Activated CD8-positive, alpha-beta T cell treated with anti-CD3 and anti-CD28 coated beads for 36 hours (primary cell): ENCODE measurements at regions of chr10 and their contacts with region 1.

Region 1: GRCh38 chr10:109914966-109915365 is 8.3 kb downstream of the XPNPEP1 start:
- DNase-seq: peak; percentile 66
- ATAC-seq: peak; percentile 87
- H3K4me3 Mint-ChIP-seq: peak overlapping the region; percentile 30
- H3K27ac Mint-ChIP-seq: peak overlapping the region; percentile 88
- H3K4me1 Mint-ChIP-seq: peaks cover 79% of the 10 kb centered on the region
- H3K27me3 Mint-ChIP-seq: no peaks in the 10 kb centered on the region
- CTCF ChIP-seq: no peak

Region 2: GRCh38 chr10:109740436-109740835 is 174.5 kb before region 1 on chr10:
- CTCF ChIA-PET with region 1: no interaction called
- POLR2A ChIA-PET with region 1: no interaction called
- intact Hi-C with region 1: no loop called
- DNase-seq: no peak
- ATAC-seq: no peak
- H3K4me3 Mint-ChIP-seq: no peak overlapping the region
- H3K27ac Mint-ChIP-seq: no peak overlapping the region
- H3K4me1 Mint-ChIP-seq: no peaks in the 10 kb centered on the region
- H3K27me3 Mint-ChIP-seq: peaks cover 5% of the 10 kb centered on the region
- CTCF ChIP-seq: no peak

Region 3: DNA sequence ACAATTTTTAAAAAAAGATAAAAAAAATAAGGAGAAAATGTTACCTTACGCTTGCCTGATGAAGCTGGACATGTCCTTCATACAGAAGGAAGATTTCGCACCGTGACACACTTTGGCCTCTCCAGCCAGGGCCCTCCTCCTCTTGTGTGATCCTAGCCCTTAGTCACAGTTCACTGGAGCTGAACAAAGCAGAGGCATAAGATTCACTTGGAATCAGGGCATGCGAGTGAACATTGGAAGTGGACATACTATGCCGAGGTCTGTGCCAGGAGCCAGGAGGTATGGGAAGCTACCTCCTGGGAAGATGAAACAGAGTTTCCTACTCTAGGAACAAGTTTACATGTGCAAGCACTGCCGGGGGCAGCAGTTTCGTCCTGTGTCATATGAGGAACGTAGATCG is 83.1 kb before region 1 on chr10:
- CTCF ChIA-PET with region 1: no interaction called
- POLR2A ChIA-PET with region 1: no interaction called
- intact Hi-C with region 1: no loop called
- DNase-seq: no peak
- ATAC-seq: no peak
- H3K4me3 Mint-ChIP-seq: no peak overlapping the region
- H3K27ac Mint-ChIP-seq: no peak overlapping the region
- H3K4me1 Mint-ChIP-seq: no peaks in the 10 kb centered on the region
- H3K27me3 Mint-ChIP-seq: peaks cover 9% of the 10 kb centered on the region
- CTCF ChIP-seq: no peak

Region 4: DNA sequence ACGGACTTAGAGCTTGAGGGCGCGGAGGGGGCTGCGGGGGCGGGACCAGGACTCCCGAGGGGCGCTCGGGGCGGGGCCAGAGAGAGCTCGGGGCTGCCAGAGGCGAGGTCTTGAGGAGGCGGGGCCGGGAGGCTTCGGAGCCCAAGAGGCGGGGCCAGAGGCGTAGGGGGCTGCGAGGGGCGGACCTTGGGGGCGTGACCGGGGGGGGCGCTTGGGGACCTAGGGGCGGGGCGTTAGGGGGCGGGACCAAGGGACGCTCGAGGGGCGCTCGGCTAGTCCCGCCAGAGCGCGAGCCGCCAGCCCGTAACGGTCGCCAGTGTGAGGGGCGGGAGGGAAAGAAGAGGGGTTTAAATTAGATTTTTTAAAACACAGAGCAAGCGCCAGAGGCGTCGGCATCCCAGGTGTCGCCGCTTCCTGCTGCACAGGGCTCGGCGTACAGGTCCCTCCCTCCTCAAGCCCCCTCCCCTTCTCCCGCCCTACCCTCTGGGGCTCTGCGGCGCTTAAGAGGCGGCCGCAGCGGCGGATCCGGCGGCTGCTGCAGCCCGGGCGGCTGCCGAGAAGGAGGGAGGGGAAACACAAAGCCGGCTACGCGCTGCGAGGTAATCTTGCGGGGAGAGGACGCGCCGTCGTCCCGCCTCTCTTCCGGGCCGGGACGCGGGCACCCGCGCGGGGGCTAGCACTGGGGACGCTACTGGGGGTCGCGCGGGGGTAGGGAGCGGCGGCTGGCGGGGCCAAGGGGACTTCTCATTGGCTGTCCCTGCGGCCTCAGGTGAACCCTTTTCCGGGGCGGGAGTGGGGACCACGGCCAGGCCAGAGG is 92.9 kb after region 1 on chr10 and contains the start of gene ADD3:
- CTCF ChIA-PET with region 1: interaction called, 3 read pairs
- POLR2A ChIA-PET with region 1: no interaction called
- intact Hi-C with region 1: loop called (anchors 5 kb)
- DNase-seq: peak; percentile 97
- ATAC-seq: peak; percentile 83
- H3K4me3 Mint-ChIP-seq: no peak within 1 kb of the TSS
- H3K27ac Mint-ChIP-seq: peak within 1 kb of the TSS; percentile 84
- H3K4me1 Mint-ChIP-seq: peaks cover 40% of the 10 kb centered on the region
- H3K27me3 Mint-ChIP-seq: no peaks in the 10 kb centered on the region
- CTCF ChIP-seq: no peak
- total RNA-seq, gene ADD3: 66.8 to 77.0 TPM

Region 5: GRCh38 chr10:110076559-110077318 is 161.8 kb after region 1 on chr10:
- CTCF ChIA-PET with region 1: no interaction called
- POLR2A ChIA-PET with region 1: no interaction called
- intact Hi-C with region 1: loop called (anchors 5 kb)
- DNase-seq: peak; percentile 41
- ATAC-seq: peak; percentile 60
- H3K4me3 Mint-ChIP-seq: peak overlapping the region; percentile 73
- H3K27ac Mint-ChIP-seq: peak overlapping the region; percentile 92
- H3K4me1 Mint-ChIP-seq: peaks cover 83% of the 10 kb centered on the region
- H3K27me3 Mint-ChIP-seq: no peaks in the 10 kb centered on the region
- CTCF ChIP-seq: no peak

Region 6: DNA sequence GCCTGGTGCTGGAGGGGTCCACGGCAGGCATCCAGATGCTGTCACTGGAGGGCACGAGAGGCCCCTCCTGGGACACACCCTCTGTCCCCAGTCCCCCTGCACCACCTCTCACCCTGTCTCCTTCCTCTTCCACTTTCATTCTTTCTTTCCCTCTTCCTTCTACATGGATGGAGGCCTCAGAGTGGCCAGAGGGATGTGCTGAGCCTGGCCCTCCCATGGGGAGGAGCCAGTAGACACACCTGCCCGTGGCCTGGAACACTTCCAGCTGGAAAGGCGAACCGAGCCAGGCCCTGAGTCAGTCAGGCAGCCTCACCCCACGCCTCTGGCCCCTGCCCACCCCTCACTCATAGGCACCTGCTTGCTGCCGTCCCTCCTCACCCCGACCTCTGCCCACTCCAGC is 236.5 kb after region 1 on chr10:
- CTCF ChIA-PET with region 1: no interaction called
- POLR2A ChIA-PET with region 1: no interaction called
- intact Hi-C with region 1: no loop called
- DNase-seq: no peak
- ATAC-seq: no peak
- H3K4me3 Mint-ChIP-seq: no peak overlapping the region
- H3K27ac Mint-ChIP-seq: no peak overlapping the region
- H3K4me1 Mint-ChIP-seq: peaks cover 9% of the 10 kb centered on the region
- H3K27me3 Mint-ChIP-seq: peaks cover 67% of the 10 kb centered on the region
- CTCF ChIP-seq: no peak